Aorta (tissue), 5 donors: ENCODE measurements at regions of chr7 and their contacts with region 1.

Region 1: GRCh38 chr7:56188823-56189346 is 72.7 kb upstream of the NUPR2 start:
- DNase-seq: peak in 1 of 2 donors; percentile 61
- ATAC-seq: peak; percentile 49
- H3K4me3 ChIP-seq: no peak overlapping the region
- H3K27ac ChIP-seq: peak overlapping the region in 1 of 2 donors; percentile 69
- H3K4me1 ChIP-seq: peaks cover 0 to 14% of the 10 kb centered on the region in 2 donors
- H3K27me3 ChIP-seq: no peaks in the 10 kb centered on the region

Region 2: DNA sequence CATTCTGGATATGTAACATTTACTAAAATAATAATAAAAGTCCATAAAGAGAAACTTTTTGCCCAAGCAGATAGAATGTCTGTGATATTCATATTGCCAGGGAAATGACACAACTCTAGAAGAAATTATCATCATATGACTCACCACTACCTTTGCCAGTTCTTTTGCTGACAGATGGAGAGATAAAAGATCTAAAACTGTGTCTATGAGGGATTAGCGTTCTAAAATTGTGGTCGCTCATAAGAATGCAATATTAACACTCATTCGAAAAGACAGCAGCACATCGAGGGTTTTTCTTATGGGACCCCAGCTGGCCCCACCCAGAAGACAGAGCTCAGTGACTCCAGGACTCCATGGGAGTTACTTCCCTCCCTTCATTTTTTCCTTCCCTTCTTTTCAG is 840.4 kb before region 1 on chr7:
- intact Hi-C with region 1: no loop called
- DNase-seq: no peak
- ATAC-seq: no peak
- H3K4me3 ChIP-seq: no peak overlapping the region
- H3K27ac ChIP-seq: no peak overlapping the region
- H3K4me1 ChIP-seq: no peaks in the 10 kb centered on the region
- H3K27me3 ChIP-seq: no peaks in the 10 kb centered on the region

Region 3: DNA sequence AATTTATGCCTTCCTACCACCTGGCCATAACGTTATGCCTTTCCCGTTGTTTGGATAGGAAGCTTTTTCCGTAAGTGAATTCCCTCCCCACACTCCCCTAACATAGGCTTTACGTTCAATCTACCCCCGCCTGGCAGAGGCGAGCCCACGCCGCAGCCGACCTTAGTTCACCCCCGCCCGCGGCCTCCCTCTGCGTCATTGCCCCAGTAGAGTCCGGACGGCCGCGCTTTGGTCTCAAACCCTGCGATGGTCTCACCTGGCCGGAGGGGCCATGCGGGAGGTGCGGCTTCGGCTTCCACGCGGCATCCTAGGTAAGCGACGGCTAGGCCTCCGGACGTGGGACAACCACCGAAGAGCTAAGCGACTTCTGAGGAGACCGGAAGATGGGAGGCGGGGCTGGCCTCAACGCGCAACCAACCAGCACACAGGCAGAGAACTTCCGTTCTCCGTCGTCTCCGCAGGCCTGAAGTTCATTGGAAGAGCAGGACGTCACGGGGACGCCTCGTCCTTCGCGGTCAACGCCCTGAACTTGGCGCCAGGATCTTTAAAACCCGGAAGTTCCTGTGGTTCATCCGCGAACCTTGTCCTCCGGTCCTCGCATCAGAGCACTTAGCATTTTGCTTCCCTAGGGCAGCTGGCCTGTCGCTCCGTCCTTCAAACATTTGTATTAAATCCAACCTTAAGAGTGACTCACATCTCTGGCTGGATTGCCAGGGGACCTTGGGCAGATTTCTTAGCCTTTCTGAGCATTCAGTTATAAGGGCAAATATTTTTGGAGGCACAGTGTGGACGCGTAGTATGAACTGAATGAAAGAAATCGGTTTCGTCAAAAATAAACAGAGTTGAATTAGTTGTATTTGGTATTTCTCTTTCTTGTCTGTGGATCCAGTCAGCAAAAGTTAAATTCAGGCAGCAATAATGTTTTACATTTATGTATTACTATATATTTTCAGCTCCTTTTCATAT is 82.5 kb before region 1 on chr7 and contains the start of gene CHCHD2:
- intact Hi-C with region 1: loop called in 1 of 2 experiments (anchors 2 kb)
- DNase-seq: peak; percentile 97 to 99
- ATAC-seq: peak; percentile 100
- H3K4me3 ChIP-seq: peak within 1 kb of the TSS; percentile 98
- H3K27ac ChIP-seq: peak within 1 kb of the TSS; percentile 77 to 87
- H3K4me1 ChIP-seq: no peaks in the 10 kb centered on the region
- H3K27me3 ChIP-seq: no peaks in the 10 kb centered on the region
- total RNA-seq, gene CHCHD2: 187 to 240 TPM

Region 4: DNA sequence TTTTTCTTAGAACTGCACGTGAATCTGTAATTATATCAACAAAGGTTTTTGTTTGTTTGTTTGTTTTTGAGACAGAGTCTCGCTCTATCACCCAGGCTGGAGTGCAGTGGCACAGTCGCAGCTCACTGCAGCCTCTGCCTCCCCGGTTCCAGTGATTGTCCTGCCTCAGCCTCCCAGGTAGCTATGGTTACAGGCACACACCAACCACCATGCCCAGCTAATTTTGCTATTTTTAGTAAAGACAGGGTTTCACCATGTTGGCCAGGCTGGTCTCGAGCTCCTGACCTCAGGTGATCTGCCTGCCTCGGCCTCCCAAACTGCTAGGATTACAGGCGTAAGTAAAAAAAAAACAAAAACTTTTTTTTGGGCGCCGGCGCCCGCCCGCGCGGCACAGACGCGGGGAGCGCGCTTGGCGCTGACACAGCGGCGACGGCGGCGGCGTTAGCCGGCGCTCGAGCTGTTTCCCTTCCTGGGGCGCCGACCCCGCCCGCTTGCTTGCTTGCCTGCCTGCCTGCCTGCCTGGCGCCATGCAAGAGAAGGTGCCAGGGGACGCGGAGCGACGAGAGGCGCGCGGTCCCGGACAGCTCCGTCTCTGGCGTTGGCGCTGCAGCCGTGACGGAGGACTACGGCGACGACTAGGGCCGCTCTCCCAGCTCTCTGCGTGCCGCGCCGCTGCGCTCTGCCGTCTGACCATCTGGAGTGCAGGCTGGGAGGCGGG is 98.7 kb after region 1 on chr7:
- intact Hi-C with region 1: loop called in 1 of 2 experiments (anchors 5 kb)
- DNase-seq: peak; percentile 66 to 86
- ATAC-seq: peak; percentile 87
- H3K4me3 ChIP-seq: peak overlapping the region in 1 of 2 donors; percentile 41
- H3K27ac ChIP-seq: peak overlapping the region in 1 of 2 donors; percentile 6
- H3K4me1 ChIP-seq: no peaks in the 10 kb centered on the region
- H3K27me3 ChIP-seq: no peaks in the 10 kb centered on the region